CD8-positive, alpha-beta T cell (primary cell): ENCODE measurements at regions of chr12 and their contacts with region 1.

Region 1: GRCh38 chr12:8996682-8997360 is 7.5 kb downstream of the KLRG1 start:
- DNase-seq: peak in 5 of 9 experiments; percentile 8 to 71 (median 24)
- ATAC-seq: peak; percentile 68
- H3K4me3 ChIP-seq: peak overlapping the region in 1 of 2 experiments; percentile 25
- H3K4me3 Mint-ChIP-seq: peak overlapping the region; percentile 61
- H3K27ac ChIP-seq: peak overlapping the region in 1 of 2 experiments; percentile 83
- H3K27ac Mint-ChIP-seq: peak overlapping the region; percentile 89
- H3K4me1 ChIP-seq: peaks cover 52% of the 10 kb centered on the region
- H3K4me1 Mint-ChIP-seq: peaks cover 65% of the 10 kb centered on the region
- H3K27me3 ChIP-seq: no peaks in the 10 kb centered on the region
- H3K27me3 Mint-ChIP-seq: no peaks in the 10 kb centered on the region
- CTCF ChIP-seq: no peak

Region 2: DNA sequence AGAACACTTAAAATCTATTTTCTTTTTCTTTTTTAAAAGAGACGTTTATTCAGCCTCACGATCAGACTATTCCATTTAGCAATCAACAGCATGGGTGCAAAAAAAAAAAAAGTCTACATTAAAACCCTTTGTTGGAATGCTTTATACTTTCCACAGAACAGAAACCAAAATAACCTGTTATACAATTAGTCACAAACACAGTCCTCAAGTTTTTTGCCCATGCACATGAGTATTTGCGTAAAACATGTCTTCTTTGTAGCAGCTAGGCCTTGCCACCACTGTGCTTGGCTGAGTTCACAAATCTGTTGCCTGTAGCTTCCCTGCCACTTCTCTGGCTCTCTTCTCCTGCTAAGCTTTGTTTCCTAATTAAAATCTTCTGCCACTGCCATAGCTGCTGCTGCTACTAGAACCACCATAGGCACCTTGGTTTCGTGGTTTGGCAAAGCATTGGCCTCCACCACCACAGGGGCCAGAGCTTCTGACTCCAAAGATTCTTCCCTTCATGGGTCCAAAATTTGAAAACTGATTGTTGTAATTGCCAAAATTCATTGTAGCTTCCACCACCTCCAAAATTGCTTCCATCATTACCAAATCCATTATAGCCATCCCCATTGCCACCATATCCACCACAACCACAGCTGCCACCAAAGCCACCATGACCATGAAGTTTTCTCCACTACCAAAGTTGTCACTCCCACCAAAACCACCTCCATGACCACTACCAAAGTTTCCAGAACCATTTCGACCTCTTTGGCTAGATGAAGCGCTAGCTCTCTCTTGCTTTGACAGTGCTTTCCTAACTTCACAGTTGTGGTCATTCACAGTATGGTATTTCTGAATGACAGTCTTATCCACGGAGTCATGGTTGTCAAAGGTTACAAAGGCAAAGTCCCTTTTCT is 30.6 kb after region 1 on chr12:
- CTCF ChIA-PET with region 1: interaction called, 3 read pairs
- POLR2A ChIA-PET with region 1: no interaction called
- intact Hi-C with region 1: loop called in 1 of 2 experiments (anchors 1 kb)
- DNase-seq: peak in 4 of 9 experiments; percentile 20 to 59 (median 28)
- ATAC-seq: no peak
- H3K4me3 ChIP-seq: no peak overlapping the region
- H3K4me3 Mint-ChIP-seq: peak overlapping the region; percentile 38
- H3K27ac ChIP-seq: peak overlapping the region in 1 of 2 experiments; percentile 86
- H3K27ac Mint-ChIP-seq: peak overlapping the region; percentile 95
- H3K4me1 ChIP-seq: peaks cover 79% of the 10 kb centered on the region
- H3K4me1 Mint-ChIP-seq: peaks cover 50% of the 10 kb centered on the region
- H3K27me3 ChIP-seq: no peaks in the 10 kb centered on the region
- H3K27me3 Mint-ChIP-seq: no peaks in the 10 kb centered on the region
- CTCF ChIP-seq: no peak

Region 3: GRCh38 chr12:9184276-9184675 is 187.5 kb after region 1 on chr12:
- CTCF ChIA-PET with region 1: no interaction called
- POLR2A ChIA-PET with region 1: no interaction called
- intact Hi-C with region 1: no loop called
- DNase-seq: no peak
- ATAC-seq: no peak
- H3K4me3 ChIP-seq: no peak overlapping the region
- H3K4me3 Mint-ChIP-seq: no peak overlapping the region
- H3K27ac ChIP-seq: no peak overlapping the region
- H3K27ac Mint-ChIP-seq: no peak overlapping the region
- H3K4me1 ChIP-seq: no peaks in the 10 kb centered on the region
- H3K4me1 Mint-ChIP-seq: peaks cover 2% of the 10 kb centered on the region
- H3K27me3 ChIP-seq: no peaks in the 10 kb centered on the region
- H3K27me3 Mint-ChIP-seq: no peaks in the 10 kb centered on the region
- CTCF ChIP-seq: no peak